PC-9 (cell line): ENCODE measurements at regions of chr6 and their contacts with region 1.

Region 1: GRCh38 chr6:136306466-136306865 is 16.8 kb upstream of the BCLAF1 start:
- DNase-seq: no peak
- H3K4me3 ChIP-seq: no peak overlapping the region
- H3K27ac ChIP-seq: no peak overlapping the region
- H3K4me1 ChIP-seq: peaks cover 7% of the 10 kb centered on the region
- H3K27me3 ChIP-seq: no peaks in the 10 kb centered on the region
- CTCF ChIP-seq: no peak

Region 2: GRCh38 chr6:135622081-135622480 is 684.4 kb before region 1 on chr6:
- CTCF ChIA-PET with region 1: no interaction called
- POLR2A ChIA-PET with region 1: interaction called, 11 read pairs
- intact Hi-C with region 1: no loop called
- DNase-seq: peak in 1 of 2 experiments; percentile 23
- H3K4me3 ChIP-seq: no peak overlapping the region
- H3K27ac ChIP-seq: no peak overlapping the region
- H3K4me1 ChIP-seq: no peaks in the 10 kb centered on the region
- H3K27me3 ChIP-seq: no peaks in the 10 kb centered on the region
- CTCF ChIP-seq: no peak